Colonic mucosa (tissue), 4 donors: ENCODE measurements at regions of chr9 and their contacts with region 1.

Region 1: DNA sequence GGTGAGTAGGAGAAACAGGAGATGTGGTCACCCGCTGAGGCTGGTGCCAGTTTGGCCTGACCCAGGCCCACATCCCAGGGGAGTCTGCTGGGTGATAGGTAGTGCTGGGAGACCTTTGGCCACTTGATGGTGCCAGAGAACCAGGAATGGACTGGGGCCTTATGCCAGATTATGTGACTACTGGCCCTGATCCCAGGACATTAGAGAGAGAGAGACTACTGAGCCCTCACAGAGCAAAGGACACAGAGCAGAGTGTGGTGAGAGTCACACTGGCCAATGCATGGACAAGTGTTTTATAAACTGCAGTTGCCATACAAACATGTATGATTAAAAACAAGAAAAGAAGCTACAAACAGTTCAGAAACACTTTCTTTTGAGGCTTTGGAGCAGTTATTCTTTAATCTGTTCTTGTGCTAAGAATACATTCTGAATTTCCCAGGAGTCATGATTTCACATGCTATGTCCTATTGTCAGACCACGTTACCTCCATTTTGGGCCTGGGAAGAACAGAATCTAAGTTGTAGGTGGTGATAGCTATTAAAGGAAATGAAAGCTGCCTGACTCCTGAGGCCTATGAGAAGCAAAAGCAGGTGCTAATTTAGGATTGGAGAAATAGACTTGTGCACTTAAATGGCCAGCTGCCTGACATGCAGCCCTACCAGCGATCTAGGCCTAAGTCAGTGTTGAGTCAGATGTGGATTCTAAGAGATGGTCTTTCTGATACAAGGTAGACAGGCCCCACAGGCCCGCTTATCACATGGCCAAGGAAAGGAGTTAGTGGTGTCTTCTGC is 32.6 kb upstream of the TMOD1 start:
- DNase-seq: peak; percentile 66
- H3K4me3 ChIP-seq: no peak overlapping the region
- H3K27ac ChIP-seq: no peak overlapping the region
- H3K4me1 ChIP-seq: no peaks in the 10 kb centered on the region
- H3K27me3 ChIP-seq: no peaks in the 10 kb centered on the region
- CTCF ChIP-seq: peak; percentile 61

Region 2: DNA sequence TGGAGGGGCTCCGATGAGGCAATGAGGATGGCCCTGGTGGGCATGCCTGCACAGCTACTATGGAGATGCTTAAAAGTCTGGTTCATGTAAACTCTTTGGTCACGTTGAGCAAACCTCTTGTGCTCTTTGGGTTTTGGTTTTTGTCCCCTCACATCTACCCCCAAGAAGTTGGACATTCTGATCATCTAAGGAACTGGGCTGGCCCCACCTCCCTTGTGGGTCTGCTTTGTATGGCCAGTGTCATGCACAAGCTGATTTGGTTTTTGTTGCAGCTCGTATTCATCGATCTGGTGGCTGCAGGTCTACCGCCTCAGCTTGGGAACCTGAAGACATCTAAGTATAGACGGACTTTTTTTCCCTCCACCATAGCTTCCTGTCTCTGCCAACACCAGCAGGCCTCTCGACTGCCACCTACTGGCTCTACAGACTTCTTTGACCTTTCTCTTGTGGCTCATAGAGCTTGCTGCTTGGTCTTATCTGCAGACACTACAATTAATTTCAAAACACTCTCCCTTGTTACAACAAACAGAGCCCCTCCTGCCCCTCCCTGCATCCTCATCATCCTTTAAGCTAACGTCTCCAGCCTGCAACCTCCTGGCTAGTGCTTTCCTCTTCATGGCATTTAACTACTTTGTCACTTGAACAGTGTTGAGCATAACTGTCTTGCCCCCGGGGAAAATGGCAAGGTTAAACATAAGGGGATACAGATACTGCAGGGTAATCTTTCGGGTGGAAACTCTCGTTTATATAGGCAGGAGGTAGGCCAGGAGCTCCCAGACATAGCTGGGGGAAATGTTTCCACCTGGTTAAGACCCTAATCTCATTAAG is 129.8 kb after region 1 on chr9:
- intact Hi-C with region 1: loop called (anchors 5 kb)
- DNase-seq: peak; percentile 83
- H3K4me3 ChIP-seq: no peak overlapping the region
- H3K27ac ChIP-seq: no peak overlapping the region
- H3K4me1 ChIP-seq: no peaks in the 10 kb centered on the region
- H3K27me3 ChIP-seq: no peaks in the 10 kb centered on the region
- CTCF ChIP-seq: peak; percentile 76

Region 3: DNA sequence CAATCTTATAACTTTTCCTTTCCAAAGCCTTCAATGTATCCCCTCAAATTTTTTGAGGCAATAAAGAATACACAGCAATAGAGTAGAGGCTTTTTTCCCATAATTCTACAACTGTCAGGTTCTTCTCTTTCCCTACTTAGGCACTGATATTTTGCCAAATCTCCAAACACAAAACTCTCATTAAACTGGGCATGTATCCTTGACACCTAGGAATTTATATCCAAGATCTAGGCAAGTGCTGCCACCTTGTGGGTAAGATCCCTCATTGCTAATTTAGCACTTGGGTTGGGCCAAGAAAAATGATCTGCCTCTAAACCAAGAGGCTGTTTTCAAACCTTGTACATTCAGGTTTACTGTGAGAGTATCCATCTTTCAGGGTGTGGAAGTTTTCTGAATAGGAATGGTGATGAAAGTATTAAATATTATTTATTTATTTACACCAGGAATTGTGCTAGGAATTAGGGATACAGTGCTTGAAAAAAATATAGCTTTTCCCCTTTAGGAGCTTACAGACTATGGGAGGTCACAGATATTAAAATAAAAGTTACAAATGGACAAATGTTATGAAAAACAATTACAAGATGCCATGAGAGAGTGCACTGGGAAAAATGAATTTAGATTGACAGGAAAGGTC is 146.7 kb after region 1 on chr9:
- intact Hi-C with region 1: loop called (anchors 5 kb)
- DNase-seq: peak; percentile 72
- H3K4me3 ChIP-seq: no peak overlapping the region
- H3K27ac ChIP-seq: no peak overlapping the region
- H3K4me1 ChIP-seq: no peaks in the 10 kb centered on the region
- H3K27me3 ChIP-seq: no peaks in the 10 kb centered on the region
- CTCF ChIP-seq: peak; percentile 86